Right ventricle myocardium inferior (tissue), 1 donor: ENCODE measurements at regions of chr6 and their contacts with region 1.

Region 1: GRCh38 chr6:10510592-10511367 is 10.4 kb upstream of the GCNT2 start:
- DNase-seq: peak; percentile 71
- ATAC-seq: peak; percentile 93

Region 2: GRCh38 chr6:10555625-10556309 is 45.0 kb after region 1 on chr6:
- intact Hi-C with region 1: loop called (anchors 5 kb)
- DNase-seq: peak; percentile 84
- ATAC-seq: peak; percentile 89

Region 3: GRCh38 chr6:10585209-10585845 is 74.5 kb after region 1 on chr6:
- intact Hi-C with region 1: loop called (anchors 1 kb)
- DNase-seq: no peak
- ATAC-seq: peak; percentile 55

Region 4: GRCh38 chr6:10621213-10621612 is 110.4 kb after region 1 on chr6:
- intact Hi-C with region 1: loop called (anchors 5 kb)
- DNase-seq: no peak
- ATAC-seq: peak; percentile 66

Region 5: GRCh38 chr6:10694302-10695085 is 183.7 kb after region 1 on chr6 and contains the starts of genes C6orf52 and PAK1IP1:
- intact Hi-C with region 1: loop called (anchors 1 kb)
- DNase-seq: peak; percentile 97
- ATAC-seq: peak; percentile 100
- total RNA-seq, gene C6orf52: 0.49 TPM
- total RNA-seq, gene PAK1IP1: 11.5 TPM

Region 6: DNA sequence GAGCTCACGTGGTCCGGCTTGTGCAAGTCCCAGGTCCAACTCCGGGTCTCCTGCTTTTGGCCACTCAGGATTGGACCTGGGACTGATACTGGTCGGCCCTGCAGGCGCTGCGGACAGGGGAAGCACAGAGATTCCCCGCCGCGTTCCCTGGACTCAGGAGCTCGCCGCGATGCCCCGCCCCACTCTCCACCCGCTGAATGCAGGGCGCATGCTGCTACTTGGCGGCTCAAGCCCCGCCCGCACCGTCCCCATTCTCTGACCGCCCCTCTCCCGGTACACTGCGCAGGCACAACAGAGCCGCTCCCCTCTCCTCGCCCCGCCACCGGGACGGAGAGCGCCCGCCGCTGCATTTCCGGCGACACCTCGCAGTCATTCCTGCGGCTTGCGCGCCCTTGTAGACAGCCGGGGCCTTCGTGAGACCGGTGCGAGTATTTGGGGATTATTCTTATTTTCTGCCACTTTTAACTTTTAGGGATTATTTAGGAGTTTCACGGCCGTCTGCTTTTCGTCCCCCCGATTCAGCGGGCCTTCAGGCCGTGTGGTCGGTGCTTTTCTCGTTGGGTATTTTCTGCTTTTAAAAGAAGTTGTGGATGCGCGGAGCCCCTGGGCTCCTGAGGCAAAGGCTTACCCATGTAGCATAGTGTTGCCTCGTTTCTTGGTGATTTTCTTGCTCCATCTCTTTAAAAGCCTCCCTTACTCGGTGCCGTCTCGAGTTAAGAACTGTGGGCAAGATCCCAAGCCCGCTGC is 212.2 kb after region 1 on chr6 and contains the start of gene TMEM14C:
- intact Hi-C with region 1: loop called (anchors 10 kb)
- DNase-seq: peak; percentile 100
- ATAC-seq: peak; percentile 99
- total RNA-seq, gene TMEM14C: 120 TPM

Region 7: DNA sequence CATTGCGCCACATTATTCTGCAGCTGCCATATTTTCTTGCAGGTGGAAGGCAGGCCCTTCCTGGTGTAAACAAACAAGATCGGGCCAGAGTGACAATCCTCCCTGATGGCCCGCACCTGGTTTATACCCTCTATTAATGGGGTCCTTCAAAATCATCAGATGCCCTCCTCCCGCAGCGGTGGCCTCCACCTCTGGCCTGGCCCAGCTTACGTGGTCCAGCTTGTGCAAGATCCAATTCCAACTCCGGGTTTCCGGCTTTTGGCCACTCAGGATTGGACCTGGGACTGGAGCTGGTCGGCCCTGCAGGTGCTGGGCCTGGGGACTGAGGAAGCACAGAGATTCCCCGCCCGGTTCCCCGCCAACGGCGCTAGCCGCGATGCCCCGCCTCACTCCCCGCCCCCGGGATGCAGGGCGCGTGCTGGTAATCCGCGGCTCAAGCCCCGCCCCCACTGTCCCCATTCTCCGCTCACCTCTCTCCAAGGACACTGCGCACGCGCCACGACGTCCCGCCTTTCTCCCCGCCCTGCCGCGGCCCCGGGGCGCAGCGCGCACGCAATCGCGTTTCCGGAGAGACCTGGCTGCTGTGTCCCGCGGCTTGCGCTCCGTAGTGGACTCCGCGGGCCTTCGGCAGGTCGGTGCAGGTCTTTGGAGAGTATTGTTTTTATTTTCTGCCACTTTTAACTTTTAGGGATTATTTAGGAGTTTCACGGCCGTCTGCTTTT is 236.6 kb after region 1 on chr6 and contains the start of gene TMEM14B:
- intact Hi-C with region 1: loop called (anchors 1 kb)
- DNase-seq: peak; percentile 100
- ATAC-seq: peak; percentile 99
- total RNA-seq, gene TMEM14B: 106 TPM

Region 8: GRCh38 chr6:11050731-11051130 is 540.0 kb after region 1 on chr6:
- intact Hi-C with region 1: no loop called
- DNase-seq: no peak
- ATAC-seq: no peak